ENCODE measurements at regions of chr12 and their contacts with region 1.

Region 1: GRCh38 chr12:5022465-5023061 is 21.1 kb upstream of the KCNA5 start:
- DNase-seq: peak; percentile 46
- H3K4me3 Mint-ChIP-seq: no peak overlapping the region
- H3K27ac Mint-ChIP-seq: no peak overlapping the region
- H3K4me1 Mint-ChIP-seq: no peaks in the 10 kb centered on the region
- H3K27me3 Mint-ChIP-seq: no peaks in the 10 kb centered on the region
- CTCF ChIP-seq: peak; percentile 86

Region 2: GRCh38 chr12:5033883-5034282 is 11.3 kb after region 1 on chr12:
- CTCF ChIA-PET with region 1: interaction called, 10 read pairs
- POLR2A ChIA-PET with region 1: no interaction called
- intact Hi-C with region 1: no loop called
- DNase-seq: no peak
- H3K4me3 Mint-ChIP-seq: no peak overlapping the region
- H3K27ac Mint-ChIP-seq: no peak overlapping the region
- H3K4me1 Mint-ChIP-seq: no peaks in the 10 kb centered on the region
- H3K27me3 Mint-ChIP-seq: no peaks in the 10 kb centered on the region
- CTCF ChIP-seq: no peak

Region 3: DNA sequence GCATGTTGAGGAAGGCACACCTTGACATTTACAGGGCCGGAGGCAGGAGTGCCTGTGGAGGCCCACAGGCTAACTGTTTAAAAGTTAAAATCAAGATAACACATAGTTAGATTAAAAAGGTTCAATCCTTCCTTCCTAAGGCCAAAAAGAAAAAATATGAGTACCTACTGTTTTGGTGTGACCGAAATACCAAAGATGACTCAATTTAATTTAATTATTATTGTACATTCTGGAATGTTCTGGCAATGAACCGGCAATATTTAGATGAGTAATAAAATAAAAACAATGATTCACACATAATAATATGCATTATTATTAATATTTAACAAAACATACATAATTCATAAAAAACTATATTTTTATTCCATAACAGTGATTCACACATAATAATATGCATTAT is 272.6 kb after region 1 on chr12:
- CTCF ChIA-PET with region 1: no interaction called
- POLR2A ChIA-PET with region 1: no interaction called
- intact Hi-C with region 1: no loop called
- DNase-seq: no peak
- H3K4me3 Mint-ChIP-seq: no peak overlapping the region
- H3K27ac Mint-ChIP-seq: no peak overlapping the region
- H3K4me1 Mint-ChIP-seq: no peaks in the 10 kb centered on the region
- H3K27me3 Mint-ChIP-seq: no peaks in the 10 kb centered on the region
- CTCF ChIP-seq: no peak